CD8-positive, alpha-beta T cell (primary cell): ENCODE measurements at regions of chr6 and their contacts with region 1.

Region 1: DNA sequence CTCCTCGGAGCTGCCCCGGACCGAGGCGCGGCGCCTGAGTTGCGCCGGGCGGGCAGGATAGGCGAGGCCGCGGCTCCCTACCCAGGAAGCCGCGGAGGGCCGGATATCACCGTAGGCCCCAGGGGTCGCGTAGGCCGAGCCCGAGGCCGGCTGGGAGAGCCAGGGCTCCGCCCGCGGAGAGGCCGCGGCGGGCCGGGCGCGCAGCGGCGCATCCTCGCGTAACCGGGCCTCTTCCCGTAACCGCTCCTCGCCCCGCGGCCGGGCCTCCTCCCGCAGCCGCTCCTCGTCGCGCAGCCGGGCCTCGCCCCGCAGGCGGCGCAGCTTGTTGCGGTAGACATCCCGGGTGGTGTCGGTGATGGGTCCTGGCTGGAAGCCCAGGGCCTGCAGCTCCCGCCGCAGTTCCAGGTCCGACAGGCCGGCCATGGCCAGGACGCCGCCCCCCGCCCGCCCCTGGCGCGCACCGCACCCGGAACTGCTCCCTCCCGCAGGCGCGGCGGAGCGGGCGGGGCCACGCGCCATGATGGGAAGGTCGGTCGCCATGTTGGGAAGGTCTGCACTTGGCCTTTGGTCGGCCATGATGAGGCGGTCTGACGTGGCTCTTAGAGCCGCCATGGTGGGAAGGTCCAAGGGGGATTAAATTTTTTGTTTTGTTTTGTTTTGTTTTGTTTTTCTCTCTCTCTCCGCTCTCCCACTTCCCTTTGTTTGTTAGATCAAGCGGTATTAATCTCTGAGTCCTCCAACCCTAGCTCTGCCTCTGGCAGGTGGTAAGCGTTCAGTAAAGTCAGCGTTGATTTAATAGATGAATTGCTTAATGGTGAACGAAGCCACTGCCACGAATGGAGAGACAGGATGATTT is at the start of gene LEMD2:
- DNase-seq: peak; percentile 88 to 95 (median 93)
- ATAC-seq: peak; percentile 91
- H3K4me3 ChIP-seq: peak within 1 kb of the TSS; percentile 55 to 90
- H3K4me3 Mint-ChIP-seq: peak within 1 kb of the TSS; percentile 97
- H3K27ac ChIP-seq: peak within 1 kb of the TSS; percentile 87 to 90
- H3K27ac Mint-ChIP-seq: peak within 1 kb of the TSS; percentile 99
- H3K4me1 ChIP-seq: peaks cover 41% of the 10 kb centered on the region
- H3K4me1 Mint-ChIP-seq: peaks cover 51% of the 10 kb centered on the region
- H3K27me3 ChIP-seq: no peaks in the 10 kb centered on the region
- H3K27me3 Mint-ChIP-seq: peaks cover 5% of the 10 kb centered on the region
- CTCF ChIP-seq: no peak
- total RNA-seq, gene LEMD2: 124 TPM

Region 2: DNA sequence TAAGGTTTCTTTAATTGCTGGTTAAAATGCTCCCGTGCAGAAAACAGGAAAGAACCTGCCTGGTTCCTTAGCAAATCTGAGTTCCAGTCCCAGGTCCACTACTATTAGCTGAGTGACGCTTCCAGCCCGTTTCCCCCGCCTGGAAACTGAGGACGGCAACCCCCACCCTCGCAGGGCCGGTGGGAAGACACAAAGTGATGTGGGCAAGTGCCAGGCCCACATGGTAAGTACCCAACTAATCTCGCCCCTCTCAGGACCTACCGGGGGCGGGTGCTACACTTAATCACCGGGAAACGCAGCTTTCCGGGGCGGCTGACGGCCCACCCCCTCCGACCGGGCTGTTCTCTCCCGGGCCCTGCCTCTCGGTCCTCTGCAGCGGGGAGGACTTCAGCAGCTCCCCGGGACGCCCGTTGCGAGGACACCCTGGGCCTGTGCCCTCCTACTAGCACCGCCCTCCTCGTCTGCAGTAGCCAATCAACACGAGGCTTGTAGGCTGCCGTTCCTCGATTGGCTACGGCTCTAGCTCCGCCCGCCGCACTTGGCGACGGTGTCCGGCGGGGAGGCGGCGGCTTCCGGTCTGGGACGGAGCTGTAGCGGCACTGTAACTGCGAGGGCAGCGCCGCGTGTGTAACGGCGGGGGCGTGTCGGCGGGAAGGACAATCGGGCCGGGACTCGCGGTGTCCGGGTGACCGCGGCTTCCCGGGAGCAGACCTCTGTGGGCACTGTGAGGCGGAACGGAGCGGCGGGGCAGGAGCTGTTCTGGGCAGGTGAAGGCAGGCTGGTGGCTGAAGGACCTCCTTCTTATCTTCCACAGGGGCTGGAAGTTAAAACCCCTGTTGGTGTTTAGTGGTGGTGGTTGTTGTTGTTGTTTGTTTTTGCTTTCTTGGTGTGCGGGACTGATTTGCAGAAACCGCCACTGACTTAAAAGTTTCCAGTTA is 334.6 kb before region 1 on chr6 and contains the start of gene ZBTB9:
- CTCF ChIA-PET with region 1: no interaction called
- POLR2A ChIA-PET with region 1: no interaction called
- intact Hi-C with region 1: loop called in 1 of 2 experiments (anchors 10 kb)
- DNase-seq: peak; percentile 86 to 96 (median 93)
- ATAC-seq: peak; percentile 98
- H3K4me3 ChIP-seq: peak within 1 kb of the TSS; percentile 92 to 93
- H3K4me3 Mint-ChIP-seq: peak within 1 kb of the TSS; percentile 98
- H3K27ac ChIP-seq: peak within 1 kb of the TSS; percentile 75 to 81
- H3K27ac Mint-ChIP-seq: peak within 1 kb of the TSS; percentile 97
- H3K4me1 ChIP-seq: peaks cover 23% of the 10 kb centered on the region
- H3K4me1 Mint-ChIP-seq: peaks cover 43% of the 10 kb centered on the region
- H3K27me3 ChIP-seq: no peaks in the 10 kb centered on the region
- H3K27me3 Mint-ChIP-seq: no peaks in the 10 kb centered on the region
- CTCF ChIP-seq: no peak
- total RNA-seq, gene ZBTB9: 7.1 to 9.5 TPM

Region 3: DNA sequence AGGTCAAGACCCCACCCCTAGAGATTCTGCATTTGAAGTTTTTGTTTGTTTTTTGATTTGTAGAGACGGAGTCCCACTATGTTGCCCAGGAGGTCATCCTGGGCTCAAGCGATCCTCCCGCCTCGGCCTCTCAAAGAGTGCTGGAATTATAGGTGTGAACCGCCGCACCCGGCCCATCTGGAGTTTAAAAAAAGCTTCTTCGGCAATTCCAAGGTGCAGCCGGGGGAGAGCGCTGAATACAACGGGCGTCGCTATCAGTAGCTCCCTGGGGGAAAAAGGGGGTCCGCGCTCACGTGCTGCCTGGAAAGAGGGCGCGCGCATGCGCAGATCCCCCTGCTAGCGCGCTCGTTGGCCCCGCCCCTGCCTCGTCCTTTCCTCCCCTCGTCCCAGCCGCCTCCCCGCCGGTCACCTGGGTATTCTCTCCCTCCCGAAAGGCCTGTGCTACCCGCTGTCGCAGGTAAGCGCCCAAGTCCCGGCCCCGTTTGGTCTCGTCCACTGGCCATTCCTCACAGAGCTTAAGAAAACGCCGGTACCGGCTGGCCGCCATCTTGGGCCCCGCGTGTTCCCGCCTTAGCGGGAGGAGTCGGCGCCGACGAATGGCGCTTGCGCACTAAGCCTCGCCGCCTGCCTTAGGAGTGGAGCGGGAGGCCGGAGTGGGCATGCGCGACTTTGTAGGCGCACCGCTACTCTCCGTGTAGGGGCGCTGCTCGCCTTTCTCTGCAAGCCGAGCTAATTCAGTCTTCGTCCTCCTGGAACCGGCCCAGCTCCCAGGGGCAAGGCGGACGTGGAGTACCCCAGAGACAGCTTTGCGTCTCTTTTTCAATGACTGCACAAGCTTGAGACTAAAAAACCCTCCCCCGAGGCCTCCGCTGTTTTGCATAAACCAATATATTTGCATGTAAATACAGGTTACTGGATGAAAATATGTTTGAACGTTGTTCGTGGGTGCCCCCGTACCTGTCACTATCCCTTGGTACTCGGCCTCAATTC is 77.5 kb before region 1 on chr6 and contains the start of gene UQCC2:
- CTCF ChIA-PET with region 1: no interaction called
- POLR2A ChIA-PET with region 1: interaction called, 4 read pairs
- intact Hi-C with region 1: loop called (anchors 1 to 2 kb)
- DNase-seq: peak; percentile 93 to 99 (median 97)
- ATAC-seq: peak; percentile 96
- H3K4me3 ChIP-seq: peak within 1 kb of the TSS; percentile 79 to 96
- H3K4me3 Mint-ChIP-seq: peak within 1 kb of the TSS; percentile 98
- H3K27ac ChIP-seq: peak within 1 kb of the TSS; percentile 71 to 88
- H3K27ac Mint-ChIP-seq: peak within 1 kb of the TSS; percentile 96
- H3K4me1 ChIP-seq: peaks cover 19% of the 10 kb centered on the region
- H3K4me1 Mint-ChIP-seq: peaks cover 36% of the 10 kb centered on the region
- H3K27me3 ChIP-seq: no peaks in the 10 kb centered on the region
- H3K27me3 Mint-ChIP-seq: no peaks in the 10 kb centered on the region
- CTCF ChIP-seq: peak; percentile 59
- total RNA-seq, gene UQCC2: 6.2 to 6.8 TPM

Region 4: DNA sequence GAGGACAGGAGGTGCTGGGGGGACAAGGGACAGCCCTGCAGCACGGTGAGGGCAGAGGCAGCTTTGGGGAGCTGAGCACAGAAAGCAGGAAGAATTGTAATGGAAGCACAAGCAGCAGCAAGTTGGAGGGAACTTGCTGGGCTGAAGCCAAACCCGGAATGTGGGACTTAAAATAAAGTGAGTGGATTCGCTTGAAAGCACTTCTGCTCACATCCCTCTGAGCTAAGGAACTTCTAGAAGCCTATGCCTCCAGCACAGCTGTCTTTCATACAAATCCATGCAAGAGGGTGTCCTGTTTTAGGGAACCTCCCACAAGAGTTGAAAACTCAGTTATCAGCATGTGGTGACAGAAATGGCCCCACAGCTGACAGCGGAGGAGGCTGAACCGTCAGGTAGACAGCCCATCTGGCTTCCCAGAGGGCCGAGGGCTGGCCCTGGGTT is 86.2 kb after region 1 on chr6:
- CTCF ChIA-PET with region 1: no interaction called
- POLR2A ChIA-PET with region 1: no interaction called
- intact Hi-C with region 1: no loop called
- DNase-seq: no peak
- ATAC-seq: no peak
- H3K4me3 ChIP-seq: no peak overlapping the region
- H3K4me3 Mint-ChIP-seq: no peak overlapping the region
- H3K27ac ChIP-seq: no peak overlapping the region
- H3K27ac Mint-ChIP-seq: no peak overlapping the region
- H3K4me1 ChIP-seq: peaks cover 7% of the 10 kb centered on the region
- H3K4me1 Mint-ChIP-seq: peaks cover 12% of the 10 kb centered on the region
- H3K27me3 ChIP-seq: peaks cover 2 to 3% of the 10 kb centered on the region in 2 experiments
- H3K27me3 Mint-ChIP-seq: peaks cover 2% of the 10 kb centered on the region
- CTCF ChIP-seq: no peak

Region 5: GRCh38 chr6:34027445-34027936 is 238.6 kb after region 1 on chr6:
- CTCF ChIA-PET with region 1: interaction called, 4 read pairs
- POLR2A ChIA-PET with region 1: no interaction called
- intact Hi-C with region 1: loop called in 1 of 2 experiments (anchors 5 kb)
- DNase-seq: peak; percentile 29 to 84 (median 64)
- ATAC-seq: peak; percentile 66
- H3K4me3 ChIP-seq: no peak overlapping the region
- H3K4me3 Mint-ChIP-seq: no peak overlapping the region
- H3K27ac ChIP-seq: no peak overlapping the region
- H3K27ac Mint-ChIP-seq: no peak overlapping the region
- H3K4me1 ChIP-seq: no peaks in the 10 kb centered on the region
- H3K4me1 Mint-ChIP-seq: no peaks in the 10 kb centered on the region
- H3K27me3 ChIP-seq: no peaks in the 10 kb centered on the region
- H3K27me3 Mint-ChIP-seq: peaks cover 5% of the 10 kb centered on the region
- CTCF ChIP-seq: peak; percentile 82

Region 6: GRCh38 chr6:34392497-34393190 is 603.7 kb after region 1 on chr6 and contains the start of gene NUDT3:
- CTCF ChIA-PET with region 1: no interaction called
- POLR2A ChIA-PET with region 1: no interaction called
- intact Hi-C with region 1: loop called in 1 of 2 experiments (anchors 10 kb)
- DNase-seq: peak; percentile 90 to 98 (median 93)
- ATAC-seq: peak; percentile 90
- H3K4me3 ChIP-seq: peak within 1 kb of the TSS; percentile 78 to 96
- H3K4me3 Mint-ChIP-seq: peak within 1 kb of the TSS; percentile 72
- H3K27ac ChIP-seq: peak within 1 kb of the TSS; percentile 71 to 75
- H3K27ac Mint-ChIP-seq: peak within 1 kb of the TSS; percentile 94
- H3K4me1 ChIP-seq: peaks cover 15% of the 10 kb centered on the region
- H3K4me1 Mint-ChIP-seq: peaks cover 26% of the 10 kb centered on the region
- H3K27me3 ChIP-seq: no peaks in the 10 kb centered on the region
- H3K27me3 Mint-ChIP-seq: no peaks in the 10 kb centered on the region
- CTCF ChIP-seq: peak; percentile 77
- total RNA-seq, gene NUDT3: 12.5 to 12.9 TPM

Region 7: GRCh38 chr6:34757687-34758274 is 968.9 kb after region 1 on chr6:
- CTCF ChIA-PET with region 1: no interaction called
- POLR2A ChIA-PET with region 1: no interaction called
- intact Hi-C with region 1: loop called in 1 of 2 experiments (anchors 5 kb)
- DNase-seq: no peak
- ATAC-seq: no peak
- H3K4me3 ChIP-seq: peak overlapping the region; percentile 71 to 79
- H3K4me3 Mint-ChIP-seq: no peak overlapping the region
- H3K27ac ChIP-seq: peak overlapping the region; percentile 86 to 92
- H3K27ac Mint-ChIP-seq: no peak overlapping the region
- H3K4me1 ChIP-seq: peaks cover 18% of the 10 kb centered on the region
- H3K4me1 Mint-ChIP-seq: peaks cover 20% of the 10 kb centered on the region
- H3K27me3 ChIP-seq: no peaks in the 10 kb centered on the region
- H3K27me3 Mint-ChIP-seq: no peaks in the 10 kb centered on the region
- CTCF ChIP-seq: no peak